HepG2 (cell line): ENCODE measurements at regions of chr6 and their contacts with region 1.

Region 1: GRCh38 chr6:90502866-90503407 is 83.9 kb downstream of the MAP3K7 start:
- DNase-seq: peak; percentile 93
- ATAC-seq: peak; percentile 100
- H3K4me3 ChIP-seq: no peak overlapping the region
- H3K27ac ChIP-seq: peak overlapping the region; percentile 77
- H3K4me1 ChIP-seq: peaks cover 24% of the 10 kb centered on the region
- H3K27me3 ChIP-seq: no peaks in the 10 kb centered on the region
- CTCF ChIP-seq: peak; percentile 31
- EP300 ChIP-seq: peak; percentile 57 to 75; a peak in 3 of 4 replicates
- POLR2A ChIP-seq: peak in 1 of 2 experiments; percentile 35; a peak in 1 of 4 replicates
- RAD21 ChIP-seq: no peak

Region 2: DNA sequence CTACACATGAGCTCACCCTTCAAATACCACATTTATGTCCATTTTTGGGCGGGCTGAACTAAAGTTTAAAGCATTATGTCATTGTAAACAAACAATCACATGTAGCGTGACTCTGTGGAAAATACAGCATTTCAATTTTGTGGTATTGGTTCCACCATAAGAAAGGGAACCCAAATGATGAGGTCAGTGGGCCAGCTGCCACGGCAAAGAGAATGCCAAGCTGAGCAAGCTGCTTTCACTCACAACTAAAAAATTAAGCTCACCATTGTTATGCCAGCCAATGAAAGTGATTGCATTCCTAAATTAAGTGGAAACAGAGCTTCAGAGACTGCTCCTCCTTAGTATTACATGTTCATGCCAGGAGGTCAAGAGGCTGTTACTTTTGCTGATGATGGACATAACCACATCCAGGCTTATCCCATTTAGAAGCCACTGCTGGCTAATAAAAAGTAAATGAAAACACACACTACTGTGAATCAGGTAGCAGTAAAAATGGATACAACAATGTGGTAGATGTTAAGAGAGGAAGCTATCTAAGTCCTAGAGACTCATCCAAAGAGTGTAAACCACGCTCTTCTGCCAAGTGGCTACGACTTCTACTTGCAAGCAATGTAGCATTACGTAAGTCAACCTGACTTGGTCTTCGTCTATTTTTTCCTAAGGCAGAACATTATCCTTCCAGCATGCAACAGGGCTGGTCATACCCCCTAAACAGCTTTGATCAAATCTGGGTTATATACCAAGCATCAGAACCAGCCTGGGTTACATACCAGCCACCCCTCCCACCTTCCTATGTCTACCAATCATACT is 371.1 kb before region 1 on chr6:
- CTCF ChIA-PET with region 1: no interaction called
- POLR2A ChIA-PET with region 1: no interaction called
- in situ Hi-C with region 1: no loop called
- intact Hi-C with region 1: no loop called
- DNase-seq: no peak
- ATAC-seq: no peak
- H3K4me3 ChIP-seq: no peak overlapping the region
- H3K27ac ChIP-seq: no peak overlapping the region
- H3K4me1 ChIP-seq: no peaks in the 10 kb centered on the region
- H3K27me3 ChIP-seq: no peaks in the 10 kb centered on the region; a peak in 1 of 5 replicates
- CTCF ChIP-seq: no peak
- EP300 ChIP-seq: no peak
- POLR2A ChIP-seq: no peak
- RAD21 ChIP-seq: no peak

Region 3: DNA sequence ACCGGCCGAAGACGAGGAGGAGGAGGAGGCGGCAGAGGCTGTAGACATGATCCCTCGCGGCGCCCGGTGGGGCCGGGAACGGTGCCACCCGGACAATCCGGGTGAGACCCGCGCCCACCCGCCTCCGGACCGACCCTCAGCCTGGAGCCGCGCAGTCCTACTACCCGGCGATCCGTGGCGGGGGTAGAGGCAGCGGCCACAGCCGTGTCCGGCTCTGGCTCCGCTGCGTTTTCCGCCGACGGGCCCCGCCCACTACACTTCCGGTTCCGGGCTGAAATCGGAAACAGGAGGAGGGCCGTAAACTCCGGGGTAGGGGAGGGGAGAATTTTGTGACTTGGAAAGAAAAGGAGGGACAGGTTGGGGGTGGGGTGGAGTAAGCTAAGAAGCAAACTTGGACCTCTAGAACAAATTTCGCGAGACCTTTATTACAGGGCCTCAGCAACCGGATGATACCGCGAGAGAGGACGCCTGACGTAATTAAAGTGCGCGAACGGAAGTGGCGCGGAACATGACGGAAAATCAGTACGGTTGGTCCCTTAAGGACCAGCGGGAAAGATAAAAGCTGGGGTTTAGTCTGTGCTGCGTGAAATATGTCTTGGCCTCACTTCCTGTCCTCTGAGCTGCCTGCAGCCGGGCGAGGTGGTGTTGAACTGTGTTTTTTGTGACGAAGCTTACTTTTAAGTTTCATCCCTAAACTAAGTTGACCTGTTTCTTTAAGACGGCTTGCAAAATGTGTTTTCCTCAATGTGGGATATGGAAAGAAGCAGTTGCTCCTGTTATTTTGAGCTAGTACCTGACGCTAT is 84.1 kb after region 1 on chr6 and contains the start of gene MAP3K7:
- CTCF ChIA-PET with region 1: no interaction called
- POLR2A ChIA-PET with region 1: no interaction called
- in situ Hi-C with region 1: no loop called
- intact Hi-C with region 1: loop called (anchors 2 kb)
- DNase-seq: peak; percentile 95
- ATAC-seq: peak; percentile 97
- H3K4me3 ChIP-seq: peak within 1 kb of the TSS; percentile 97 to 100 (median 99)
- H3K27ac ChIP-seq: peak within 1 kb of the TSS; percentile 86
- H3K4me1 ChIP-seq: peaks cover 32% of the 10 kb centered on the region
- H3K27me3 ChIP-seq: no peaks in the 10 kb centered on the region; a peak in 1 of 5 replicates
- CTCF ChIP-seq: no peak
- EP300 ChIP-seq: no peak
- POLR2A ChIP-seq: peak; percentile 71 to 81
- RAD21 ChIP-seq: no peak
- total RNA-seq, gene MAP3K7: 24.4 and 29.6 TPM in 2 replicates